Adrenal gland (tissue), 19 donors: ENCODE measurements at regions of chr16 and their contacts with region 1.

Region 1: GRCh38 chr16:3317315-3317999 is 12.2 kb downstream of the ZNF75A start:
- DNase-seq: no peak
- H3K4me3 ChIP-seq: peak overlapping the region in 1 of 4 donors; percentile 7
- H3K27ac ChIP-seq: no peak overlapping the region
- H3K4me1 ChIP-seq: no peaks in the 10 kb centered on the region
- H3K27me3 ChIP-seq: no peaks in the 10 kb centered on the region
- CTCF ChIP-seq: no peak
- POLR2A ChIP-seq: no peak

Region 2: DNA sequence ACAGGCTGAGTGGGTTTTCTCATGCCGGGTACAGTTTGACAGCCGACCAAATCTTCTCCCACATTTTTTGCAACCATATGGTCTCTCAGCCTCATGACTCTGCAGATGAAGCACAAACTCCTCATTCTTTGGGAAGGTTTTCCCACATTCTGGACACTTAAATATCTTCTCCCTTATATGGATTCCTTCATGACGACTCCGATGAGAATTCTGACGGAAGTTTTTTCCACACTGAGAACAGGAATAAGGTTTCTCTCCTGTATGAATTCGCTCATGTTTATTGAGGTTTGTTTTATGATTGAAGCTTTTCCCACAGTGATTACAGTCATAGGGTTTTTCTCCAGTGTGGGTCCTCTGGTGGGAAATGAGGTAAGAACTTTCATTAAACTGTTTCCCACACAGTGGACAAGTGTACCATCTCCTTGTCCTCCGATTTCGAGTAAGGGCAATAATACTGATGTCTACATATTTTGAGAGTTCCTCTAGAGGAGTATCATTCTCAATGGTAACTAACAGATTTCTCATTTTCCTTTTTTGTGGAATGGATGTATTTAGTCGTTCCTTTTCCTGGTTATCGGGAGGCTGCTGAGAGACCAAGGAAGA is 93.4 kb before region 1 on chr16:
- intact Hi-C with region 1: loop called in 1 of 2 experiments (anchors 10 kb)
- DNase-seq: no peak
- H3K4me3 ChIP-seq: no peak overlapping the region
- H3K27ac ChIP-seq: no peak overlapping the region
- H3K4me1 ChIP-seq: no peaks in the 10 kb centered on the region
- H3K27me3 ChIP-seq: no peaks in the 10 kb centered on the region
- CTCF ChIP-seq: no peak
- POLR2A ChIP-seq: no peak

Region 3: GRCh38 chr16:3400779-3401688 is 83.6 kb after region 1 on chr16 and contains the starts of genes ZNF174 and ZSCAN32:
- intact Hi-C with region 1: loop called in 1 of 2 experiments (anchors 10 kb)
- DNase-seq: peak; percentile 99 to 100 (median 99)
- H3K4me3 ChIP-seq: peak within 1 kb of the TSS; percentile 58 to 87 (median 74)
- H3K27ac ChIP-seq: peak within 1 kb of the TSS; percentile 66 to 89 (median 82)
- H3K4me1 ChIP-seq: peaks cover 7 to 17% of the 10 kb centered on the region in 2 donors
- H3K27me3 ChIP-seq: no peaks in the 10 kb centered on the region
- CTCF ChIP-seq: peak in 1 of 6 experiments; percentile 5
- POLR2A ChIP-seq: peak; percentile 28 to 80
- total RNA-seq, gene ZNF174: 8.6 to 22.2 (median 11.0) TPM
- total RNA-seq, gene ZSCAN32: 11.5 to 20.1 (median 14.3) TPM

Region 4: DNA sequence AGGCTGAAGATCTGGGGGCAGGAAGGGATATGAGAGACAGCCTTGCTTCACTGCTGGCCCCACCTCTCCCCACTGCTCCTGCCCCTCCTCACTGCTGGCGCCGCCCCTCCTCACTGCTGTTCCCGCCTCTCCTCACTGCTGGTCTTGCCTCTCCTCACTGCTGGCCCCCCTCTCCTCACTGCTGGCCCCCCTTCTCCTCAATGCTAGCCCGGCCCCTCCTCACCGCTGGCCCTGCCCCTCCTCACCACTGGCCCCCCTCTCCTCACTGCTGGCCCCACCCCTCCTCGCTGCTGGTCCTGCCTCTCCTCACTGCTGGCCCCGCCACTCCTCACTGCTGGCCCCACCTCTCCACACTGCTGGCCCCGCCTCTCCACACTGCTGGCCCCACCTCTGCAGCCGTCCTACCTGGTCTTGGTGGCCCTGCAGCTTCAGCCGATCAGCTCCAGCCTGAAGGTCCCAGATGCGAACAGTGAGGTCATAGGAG is 1043.1 kb after region 1 on chr16:
- intact Hi-C with region 1: no loop called
- DNase-seq: no peak
- H3K4me3 ChIP-seq: no peak overlapping the region
- H3K27ac ChIP-seq: no peak overlapping the region
- H3K4me1 ChIP-seq: no peaks in the 10 kb centered on the region
- H3K27me3 ChIP-seq: no peaks in the 10 kb centered on the region
- CTCF ChIP-seq: no peak
- POLR2A ChIP-seq: no peak